Posterior vena cava (tissue), 2 donors: ENCODE measurements at regions of chr18 and their contacts with region 1.

Region 1: DNA sequence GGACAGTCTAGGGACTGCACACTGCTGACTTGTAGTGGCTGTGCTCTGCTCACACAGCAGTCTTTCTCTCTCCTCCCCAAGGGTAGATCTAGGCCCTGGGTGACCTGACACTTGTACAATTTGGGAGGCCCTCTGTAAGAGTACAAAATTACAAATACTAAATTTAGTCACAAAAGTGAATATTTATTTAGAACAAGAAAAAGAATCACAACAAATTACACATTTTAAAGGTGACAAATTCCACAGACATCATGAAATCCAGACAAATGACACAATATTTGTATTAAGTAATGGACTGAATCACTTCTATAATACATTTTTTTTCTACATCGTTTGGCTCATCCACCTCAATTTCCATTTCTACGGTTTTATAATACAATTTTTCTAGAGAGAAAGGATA is 496.4 kb downstream of the TXNL1 start:
- DNase-seq: no peak

Region 2: GRCh38 chr18:56076723-56077122 is 65.3 kb before region 1 on chr18:
- intact Hi-C with region 1: loop called in 1 of 2 experiments (anchors 2 kb)
- DNase-seq: no peak

Region 3: GRCh38 chr18:56173542-56174220 is 31.7 kb after region 1 on chr18:
- intact Hi-C with region 1: no loop called
- DNase-seq: no peak

Region 4: GRCh38 chr18:56235481-56236013 is 93.5 kb after region 1 on chr18:
- intact Hi-C with region 1: no loop called
- DNase-seq: no peak